Activated naive CD4-positive, alpha-beta T cell treated with anti-CD3 and anti-CD28 coated beads for 36 hours (primary cell): ENCODE measurements at regions of chr10 and their contacts with region 1.

Region 1: DNA sequence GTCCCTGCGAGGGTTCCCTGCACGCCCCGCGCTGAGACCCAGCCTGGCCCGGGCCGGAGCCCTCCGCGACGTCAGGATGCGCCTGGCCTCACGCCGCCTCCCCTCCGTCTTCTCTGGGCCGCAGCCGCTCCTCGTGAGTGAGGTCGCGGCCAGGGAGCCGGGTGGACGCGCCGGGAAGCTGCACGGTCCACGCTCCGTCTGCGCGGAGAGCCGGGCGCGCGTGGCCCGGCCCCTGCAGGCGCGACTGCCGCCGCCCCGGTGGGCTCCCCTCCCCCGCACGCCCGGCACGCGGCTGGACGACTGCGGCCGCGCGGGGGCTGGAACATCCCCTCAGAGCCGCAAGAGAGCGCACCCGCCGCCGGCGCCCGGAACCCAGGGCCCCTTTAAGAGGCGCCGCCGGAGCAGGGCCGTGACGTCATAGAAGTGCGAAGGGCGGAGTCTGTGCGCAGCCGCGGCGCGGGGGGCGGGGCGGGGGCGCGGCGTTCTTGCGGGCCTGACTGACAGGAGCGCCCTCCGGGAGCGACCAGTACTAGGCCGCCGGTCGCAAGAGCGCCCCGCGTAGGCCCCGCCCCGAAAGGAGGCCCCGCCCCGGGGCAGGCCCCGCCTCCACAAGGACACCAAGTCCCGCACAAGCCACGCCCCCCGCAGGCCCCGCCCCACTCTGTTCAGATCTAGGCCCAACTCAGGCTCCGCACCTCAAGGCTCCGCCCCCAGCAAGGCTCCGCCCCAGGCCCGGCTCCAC is 445 bp upstream of the INPP5A start:
- DNase-seq: peak; percentile 100
- H3K4me3 Mint-ChIP-seq: peak overlapping the region; percentile 64
- H3K27ac Mint-ChIP-seq: no peak overlapping the region
- H3K4me1 Mint-ChIP-seq: peaks cover 49% of the 10 kb centered on the region
- H3K27me3 Mint-ChIP-seq: peaks cover 1% of the 10 kb centered on the region

Region 2: GRCh38 chr10:131900350-131901146 is 636.6 kb before region 1 on chr10 and contains the start of gene PPP2R2D:
- CTCF ChIA-PET with region 1: no interaction called
- intact Hi-C with region 1: loop called (anchors 5 kb)
- DNase-seq: peak; percentile 94
- H3K4me3 Mint-ChIP-seq: peak within 1 kb of the TSS; percentile 87
- H3K27ac Mint-ChIP-seq: peak within 1 kb of the TSS; percentile 92
- H3K4me1 Mint-ChIP-seq: peaks cover 47% of the 10 kb centered on the region
- H3K27me3 Mint-ChIP-seq: peaks cover 4% of the 10 kb centered on the region
- total RNA-seq, gene PPP2R2D: 31.5 to 34.7 TPM

Region 3: GRCh38 chr10:132331526-132332432 is 205.4 kb before region 1 on chr10 and contains the start of gene LRRC27:
- CTCF ChIA-PET with region 1: no interaction called
- intact Hi-C with region 1: loop called (anchors 2 kb)
- DNase-seq: peak; percentile 98
- H3K4me3 Mint-ChIP-seq: peak within 1 kb of the TSS; percentile 92
- H3K27ac Mint-ChIP-seq: peak within 1 kb of the TSS; percentile 87
- H3K4me1 Mint-ChIP-seq: peaks cover 63% of the 10 kb centered on the region
- H3K27me3 Mint-ChIP-seq: no peaks in the 10 kb centered on the region
- total RNA-seq, gene LRRC27: 1.5 to 1.9 TPM

Region 4: GRCh38 chr10:132551093-132551807 is 14.1 kb after region 1 on chr10:
- CTCF ChIA-PET with region 1: interaction called, 28 read pairs
- intact Hi-C with region 1: loop called (anchors 1 kb)
- DNase-seq: peak; percentile 76
- H3K4me3 Mint-ChIP-seq: peak overlapping the region; percentile 72
- H3K27ac Mint-ChIP-seq: peak overlapping the region; percentile 69
- H3K4me1 Mint-ChIP-seq: peaks cover 40% of the 10 kb centered on the region
- H3K27me3 Mint-ChIP-seq: no peaks in the 10 kb centered on the region

Region 5: DNA sequence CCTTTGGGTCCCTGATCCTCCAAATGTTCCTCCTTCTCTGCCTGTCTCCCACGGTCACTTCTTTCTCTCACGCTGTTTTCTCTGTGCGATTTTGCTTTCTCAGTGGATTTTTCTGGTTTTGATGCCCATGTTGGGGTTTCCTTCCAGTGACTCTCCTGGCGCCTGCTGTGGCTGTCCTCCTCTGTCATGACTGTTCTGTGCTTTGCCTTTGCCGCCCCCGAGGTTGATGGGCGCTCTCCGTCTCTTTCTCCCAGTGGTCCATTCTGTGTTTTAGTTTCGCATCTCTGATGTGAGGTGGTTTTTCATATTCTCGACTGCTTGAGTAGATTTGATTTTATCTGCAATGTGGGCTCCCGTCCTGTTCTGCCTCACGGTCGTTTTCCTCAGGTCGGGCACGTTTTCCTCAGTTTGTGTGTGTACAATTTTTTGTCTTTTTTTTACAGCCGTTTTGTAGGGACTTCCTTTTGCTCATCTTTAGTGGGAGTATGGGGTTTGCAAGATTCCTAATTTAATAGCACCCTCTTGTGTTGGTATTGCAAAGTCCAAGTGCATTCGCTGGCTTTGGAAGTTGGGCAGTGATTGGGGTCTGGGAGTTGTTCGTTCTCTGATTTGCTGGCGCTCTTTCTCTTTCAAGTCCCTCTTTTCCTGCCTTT is 100.5 kb after region 1 on chr10:
- CTCF ChIA-PET with region 1: interaction called, 4 read pairs
- intact Hi-C with region 1: loop called (anchors 2 kb)
- DNase-seq: peak; percentile 24
- H3K4me3 Mint-ChIP-seq: no peak overlapping the region
- H3K27ac Mint-ChIP-seq: no peak overlapping the region
- H3K4me1 Mint-ChIP-seq: peaks cover 12% of the 10 kb centered on the region
- H3K27me3 Mint-ChIP-seq: no peaks in the 10 kb centered on the region

Region 6: GRCh38 chr10:132665946-132666704 is 129.0 kb after region 1 on chr10:
- CTCF ChIA-PET with region 1: no interaction called
- intact Hi-C with region 1: no loop called
- DNase-seq: peak; percentile 60
- H3K4me3 Mint-ChIP-seq: no peak overlapping the region
- H3K27ac Mint-ChIP-seq: no peak overlapping the region
- H3K4me1 Mint-ChIP-seq: peaks cover 11% of the 10 kb centered on the region
- H3K27me3 Mint-ChIP-seq: no peaks in the 10 kb centered on the region

Region 7: GRCh38 chr10:133278577-133279265 is 741.6 kb after region 1 on chr10:
- CTCF ChIA-PET with region 1: no interaction called
- intact Hi-C with region 1: loop called (anchors 1 kb)
- DNase-seq: no peak
- H3K4me3 Mint-ChIP-seq: no peak overlapping the region
- H3K27ac Mint-ChIP-seq: peak overlapping the region; percentile 19
- H3K4me1 Mint-ChIP-seq: peaks cover 23% of the 10 kb centered on the region
- H3K27me3 Mint-ChIP-seq: no peaks in the 10 kb centered on the region